ENCODE measurements at regions of chr10 and their contacts with region 1.

Region 1: DNA sequence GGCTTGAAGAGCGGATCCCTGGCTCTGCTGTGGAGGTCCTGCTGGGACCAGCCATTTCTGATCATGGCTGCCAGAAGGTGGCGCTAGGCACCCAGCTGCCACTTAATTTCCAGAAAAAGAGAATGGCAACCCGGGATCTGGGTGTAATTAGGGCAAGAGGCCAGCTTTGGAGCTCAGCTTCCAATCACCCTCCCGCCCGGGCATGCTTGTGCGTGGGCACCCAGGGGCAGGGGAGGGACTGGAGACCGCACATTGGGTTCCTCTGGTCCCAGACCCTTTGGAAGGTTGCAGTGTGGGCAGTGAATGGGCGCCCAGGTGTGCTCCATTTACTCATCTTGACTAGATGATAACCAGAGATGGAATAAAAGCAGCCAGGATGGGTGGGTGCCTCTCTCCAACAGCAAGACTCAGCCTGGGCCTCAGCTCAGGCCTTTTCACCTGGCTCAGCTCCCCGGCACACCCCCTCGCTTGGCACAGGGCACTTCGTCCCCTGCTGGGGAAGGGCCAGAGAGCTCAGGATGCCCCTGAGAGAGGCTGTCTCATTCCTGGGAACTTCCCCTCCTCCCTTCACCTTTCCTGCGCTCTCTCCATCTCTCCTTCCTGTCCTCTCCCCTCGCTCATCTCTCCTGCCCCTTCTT is 14.7 kb downstream of the FAM241B start:
- DNase-seq: peak; percentile 74 to 81
- H3K4me3 ChIP-seq: no peak overlapping the region
- H3K4me3 Mint-ChIP-seq: no peak overlapping the region
- H3K27ac Mint-ChIP-seq: no peak overlapping the region
- H3K4me1 ChIP-seq: no peaks in the 10 kb centered on the region
- H3K4me1 Mint-ChIP-seq: no peaks in the 10 kb centered on the region
- H3K27me3 ChIP-seq: 0 out of 2 replicates have a peak, but pooled peaks cover 1% of the 10 kb centered on the region
- H3K27me3 Mint-ChIP-seq: peaks cover 19% of the 10 kb centered on the region
- CTCF ChIP-seq: peak; percentile 96

Region 2: GRCh38 chr10:69418052-69418752 is 226.6 kb before region 1 on chr10:
- CTCF ChIA-PET with region 1: no interaction called
- POLR2A ChIA-PET with region 1: no interaction called
- intact Hi-C with region 1: no loop called
- DNase-seq: peak; percentile 57 to 75
- H3K4me3 ChIP-seq: no peak overlapping the region
- H3K4me3 Mint-ChIP-seq: peak overlapping the region; percentile 8
- H3K27ac Mint-ChIP-seq: peak overlapping the region; percentile 67
- H3K4me1 ChIP-seq: peaks cover 23% of the 10 kb centered on the region
- H3K4me1 Mint-ChIP-seq: peaks cover 12% of the 10 kb centered on the region
- H3K27me3 ChIP-seq: no peaks in the 10 kb centered on the region
- H3K27me3 Mint-ChIP-seq: no peaks in the 10 kb centered on the region
- CTCF ChIP-seq: no peak

Region 3: DNA sequence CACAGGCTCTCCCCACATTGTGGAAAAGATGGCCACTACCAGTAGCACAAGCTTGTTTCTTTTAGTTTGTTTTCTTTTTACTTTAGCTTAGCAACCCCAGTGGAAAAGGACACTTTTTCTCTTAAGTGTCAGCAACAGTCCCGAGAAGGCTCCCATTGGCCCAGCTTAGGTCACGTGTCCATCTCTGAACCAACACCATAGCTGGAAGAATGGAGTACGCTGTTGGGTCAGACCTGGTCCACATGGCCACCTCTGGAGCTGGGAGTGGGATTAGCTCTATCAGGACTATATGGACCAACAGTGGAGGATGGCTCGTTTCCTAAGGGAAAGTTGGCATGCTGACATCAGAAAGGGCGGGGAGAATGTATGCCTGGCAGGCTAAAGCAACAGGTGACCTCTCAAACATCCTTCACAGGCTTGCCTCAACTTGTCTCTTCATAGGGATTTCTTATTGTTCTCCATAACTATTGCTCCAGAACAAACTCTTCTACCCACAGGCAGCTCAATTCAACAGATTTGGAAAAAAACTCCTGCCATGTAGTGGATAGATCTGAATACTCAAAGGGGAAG is 43.9 kb before region 1 on chr10:
- CTCF ChIA-PET with region 1: no interaction called
- POLR2A ChIA-PET with region 1: no interaction called
- intact Hi-C with region 1: no loop called
- DNase-seq: no peak
- H3K4me3 ChIP-seq: no peak overlapping the region
- H3K4me3 Mint-ChIP-seq: no peak overlapping the region
- H3K27ac Mint-ChIP-seq: no peak overlapping the region
- H3K4me1 ChIP-seq: no peaks in the 10 kb centered on the region
- H3K4me1 Mint-ChIP-seq: no peaks in the 10 kb centered on the region
- H3K27me3 ChIP-seq: no peaks in the 10 kb centered on the region; the same call in 1 of the 2 replicates
- H3K27me3 Mint-ChIP-seq: peaks cover 30% of the 10 kb centered on the region
- CTCF ChIP-seq: no peak

Region 4: DNA sequence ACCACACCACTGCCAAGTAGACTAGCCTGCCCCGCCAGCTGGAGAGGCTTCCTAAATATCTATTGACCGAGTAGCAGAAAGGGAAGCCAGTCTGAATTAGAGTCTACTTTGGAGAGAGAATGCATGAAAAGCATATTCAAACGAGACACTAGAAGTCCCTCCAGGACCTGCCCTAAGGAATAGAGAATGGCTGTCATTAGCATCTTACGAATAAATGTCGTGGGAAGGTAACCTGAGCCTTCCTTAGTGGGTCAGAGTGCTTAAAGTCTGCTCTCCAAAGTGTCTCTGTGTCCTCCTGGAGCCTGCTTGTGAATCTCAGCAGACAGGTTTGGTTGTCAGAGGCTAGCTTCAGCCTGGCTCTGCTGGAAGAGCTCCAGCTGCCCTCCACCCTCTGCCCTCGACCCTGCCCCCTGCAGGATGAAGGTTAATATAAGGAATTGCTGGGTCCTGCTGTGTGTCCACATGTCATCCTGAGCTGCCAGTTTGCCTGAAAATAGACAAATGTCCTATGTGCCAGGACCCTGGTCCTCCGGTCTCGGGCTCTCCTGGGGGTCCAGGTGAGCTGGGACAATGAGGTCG is 18.7 kb after region 1 on chr10:
- CTCF ChIA-PET with region 1: interaction called, 7 read pairs
- POLR2A ChIA-PET with region 1: no interaction called
- intact Hi-C with region 1: loop called (anchors 1 kb)
- DNase-seq: peak in 1 of 2 experiments; percentile 67
- H3K4me3 ChIP-seq: no peak overlapping the region
- H3K4me3 Mint-ChIP-seq: no peak overlapping the region
- H3K27ac Mint-ChIP-seq: no peak overlapping the region
- H3K4me1 ChIP-seq: no peaks in the 10 kb centered on the region
- H3K4me1 Mint-ChIP-seq: no peaks in the 10 kb centered on the region
- H3K27me3 ChIP-seq: peaks cover 4% of the 10 kb centered on the region
- H3K27me3 Mint-ChIP-seq: peaks cover 36% of the 10 kb centered on the region
- CTCF ChIP-seq: peak; percentile 47 to 54

Region 5: GRCh38 chr10:69716711-69717560 is 72.2 kb after region 1 on chr10:
- CTCF ChIA-PET with region 1: interaction called, 23 read pairs
- POLR2A ChIA-PET with region 1: interaction called, 4 read pairs
- intact Hi-C with region 1: loop called (anchors 1 kb)
- DNase-seq: peak; percentile 73 to 86
- H3K4me3 ChIP-seq: no peak overlapping the region
- H3K4me3 Mint-ChIP-seq: no peak overlapping the region
- H3K27ac Mint-ChIP-seq: no peak overlapping the region
- H3K4me1 ChIP-seq: no peaks in the 10 kb centered on the region
- H3K4me1 Mint-ChIP-seq: no peaks in the 10 kb centered on the region
- H3K27me3 ChIP-seq: no peaks in the 10 kb centered on the region
- H3K27me3 Mint-ChIP-seq: peaks cover 24% of the 10 kb centered on the region
- CTCF ChIP-seq: peak; percentile 94 to 99

Measured in Caco-2 (cell line).